CD4-positive, alpha-beta memory T cell (primary cell): ENCODE measurements at regions of chr3 and their contacts with region 1.

Region 1: DNA sequence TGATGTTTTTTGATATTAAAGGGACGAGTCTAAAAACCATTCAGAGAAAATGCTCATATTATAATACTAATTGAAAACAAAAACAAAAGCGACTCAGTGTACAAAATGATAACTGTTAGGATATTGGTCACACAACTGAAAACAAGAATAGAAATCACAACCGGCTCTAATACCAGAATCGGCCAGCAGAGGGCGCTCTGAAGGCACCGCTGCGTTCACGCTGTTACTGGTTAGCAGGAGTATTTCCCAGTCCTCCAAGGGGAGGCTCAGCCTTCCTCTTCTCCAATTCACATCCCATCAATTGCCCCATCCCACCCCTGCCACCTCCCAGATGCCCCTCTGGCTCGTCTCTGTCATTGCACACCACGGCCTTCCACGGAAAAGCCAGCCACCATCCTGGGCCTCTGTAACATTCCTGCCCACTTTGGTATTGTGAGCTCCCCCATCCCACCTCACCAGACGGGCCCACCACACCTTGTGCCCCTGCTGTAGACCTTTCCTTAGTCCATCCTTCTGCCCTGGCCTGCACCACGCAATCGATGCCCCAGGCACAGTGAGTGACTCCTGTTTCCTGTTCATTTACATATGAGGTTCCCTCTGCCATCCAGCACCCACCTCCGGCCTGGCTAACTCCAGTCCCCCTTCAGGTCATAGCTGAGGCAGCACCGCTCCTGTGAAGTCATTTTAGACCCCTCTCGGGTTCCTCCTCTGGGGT is 8.5 kb downstream of the FAM107A start:
- DNase-seq: peak in 4 of 5 donors; percentile 37 to 50 (median 41)
- H3K4me3 ChIP-seq: no peak overlapping the region
- H3K4me3 Mint-ChIP-seq: peak overlapping the region; percentile 2 to 72 (median 54)
- H3K27ac ChIP-seq: no peak overlapping the region
- H3K27ac Mint-ChIP-seq: peak overlapping the region in 2 of 7 donors; percentile 79 to 81
- H3K4me1 ChIP-seq: peaks cover 7% of the 10 kb centered on the region
- H3K4me1 Mint-ChIP-seq: peaks cover 4 to 7% (median 6%) of the 10 kb centered on the region in 4 donors
- H3K27me3 ChIP-seq: no peaks in the 10 kb centered on the region
- H3K27me3 Mint-ChIP-seq: peaks cover 2 to 7% of the 10 kb centered on the region in 2 donors

Region 2: DNA sequence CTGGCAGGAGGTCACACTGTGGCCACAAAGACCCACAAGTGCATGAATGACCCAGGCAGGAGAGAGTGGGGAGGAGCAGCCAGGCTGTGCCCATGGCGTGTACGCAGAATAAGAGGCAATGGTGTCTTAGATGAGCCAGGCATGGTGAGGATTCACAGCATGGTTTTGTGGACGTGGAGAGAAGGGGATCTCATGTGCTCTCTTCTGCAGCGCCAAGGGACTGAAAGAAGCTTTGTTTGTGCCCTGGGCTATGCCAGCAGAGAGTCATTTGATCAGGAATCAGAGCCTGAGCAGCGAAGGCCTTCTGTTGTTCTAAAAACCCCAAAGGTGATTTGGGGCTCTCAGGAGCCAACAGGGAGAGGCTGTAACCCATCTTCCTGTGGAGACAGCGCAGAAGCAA is 281.4 kb before region 1 on chr3:
- CTCF ChIA-PET with region 1: no interaction called
- POLR2A ChIA-PET with region 1: no interaction called
- intact Hi-C with region 1: no loop called
- DNase-seq: no peak
- H3K4me3 ChIP-seq: no peak overlapping the region
- H3K4me3 Mint-ChIP-seq: no peak overlapping the region
- H3K27ac ChIP-seq: no peak overlapping the region
- H3K27ac Mint-ChIP-seq: peak overlapping the region in 1 of 7 donors; percentile 72
- H3K4me1 ChIP-seq: no peaks in the 10 kb centered on the region
- H3K4me1 Mint-ChIP-seq: no peaks in the 10 kb centered on the region
- H3K27me3 ChIP-seq: no peaks in the 10 kb centered on the region
- H3K27me3 Mint-ChIP-seq: no peaks in the 10 kb centered on the region

Region 3: DNA sequence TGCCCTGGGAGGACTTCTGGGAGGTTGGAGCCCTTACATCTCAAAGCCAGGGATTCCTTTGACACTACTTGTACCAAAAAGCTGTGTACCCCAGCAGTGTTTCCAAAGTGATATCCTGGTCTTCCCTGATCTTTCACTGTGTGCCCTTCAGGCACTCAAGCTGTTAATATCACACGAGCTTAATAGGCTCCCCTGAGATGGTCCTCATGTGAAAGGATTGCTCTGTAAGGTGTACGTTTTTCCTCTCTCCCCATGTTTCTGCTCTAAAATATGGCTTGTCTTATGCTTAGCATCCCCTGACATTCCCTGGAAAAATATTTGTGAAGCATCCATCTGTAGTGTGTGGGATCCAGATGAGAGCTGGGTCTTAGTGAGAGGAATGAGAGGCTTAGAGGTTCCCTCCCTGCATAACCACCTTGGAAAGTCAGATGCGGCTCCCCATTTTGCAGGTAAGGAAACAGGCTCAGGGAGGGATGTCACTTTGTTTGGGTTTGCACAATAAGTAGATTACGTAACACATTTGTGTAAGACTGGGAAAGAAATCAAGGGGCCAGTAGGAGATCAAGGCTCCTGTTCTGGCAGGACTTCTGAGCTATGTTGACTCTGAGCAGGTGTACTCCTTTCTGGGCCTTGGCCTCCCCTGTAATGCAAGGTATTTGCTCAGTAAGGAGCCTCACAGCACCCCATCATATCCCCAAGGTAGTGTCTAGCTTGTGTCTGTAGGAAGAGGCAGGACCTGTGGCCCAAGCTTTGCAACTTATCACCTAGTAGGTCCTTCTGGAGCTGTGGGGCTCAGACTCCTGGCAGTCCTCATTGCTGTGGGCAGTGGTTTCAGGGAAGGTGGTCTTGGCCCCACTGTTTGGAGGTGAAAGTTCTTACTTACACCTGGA is 31.1 kb before region 1 on chr3:
- CTCF ChIA-PET with region 1: no interaction called
- POLR2A ChIA-PET with region 1: no interaction called
- intact Hi-C with region 1: no loop called
- DNase-seq: no peak
- H3K4me3 ChIP-seq: no peak overlapping the region
- H3K4me3 Mint-ChIP-seq: no peak overlapping the region
- H3K27ac ChIP-seq: no peak overlapping the region
- H3K27ac Mint-ChIP-seq: no peak overlapping the region
- H3K4me1 ChIP-seq: peaks cover 6% of the 10 kb centered on the region
- H3K4me1 Mint-ChIP-seq: peaks cover 3 to 6% (median 5%) of the 10 kb centered on the region in 4 donors
- H3K27me3 ChIP-seq: no peaks in the 10 kb centered on the region
- H3K27me3 Mint-ChIP-seq: no peaks in the 10 kb centered on the region

Region 4: DNA sequence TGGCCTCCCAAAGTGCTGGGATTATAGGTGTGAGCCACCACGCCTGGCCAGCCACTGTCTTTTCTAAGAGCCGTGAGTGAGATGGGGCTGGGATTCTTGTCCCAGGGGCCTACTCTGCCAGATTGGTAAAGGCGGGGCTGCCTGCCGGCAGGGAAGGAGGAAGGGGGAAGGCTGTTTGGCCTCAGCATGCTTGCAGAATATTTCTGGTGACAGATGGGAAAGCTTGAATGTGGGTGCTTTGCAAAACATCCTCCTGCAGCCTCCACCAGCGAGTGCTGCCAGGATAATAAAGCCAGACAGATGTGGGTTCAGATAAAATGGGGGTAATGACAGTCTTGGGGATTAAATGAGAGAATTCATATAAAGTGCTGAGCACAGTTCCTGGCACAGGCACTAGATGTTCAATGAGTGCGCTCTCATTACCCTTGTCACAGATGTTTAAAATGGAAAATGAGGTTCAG is 11.9 kb before region 1 on chr3:
- CTCF ChIA-PET with region 1: interaction called, 54 read pairs
- POLR2A ChIA-PET with region 1: no interaction called
- intact Hi-C with region 1: no loop called
- DNase-seq: no peak
- H3K4me3 ChIP-seq: no peak overlapping the region
- H3K4me3 Mint-ChIP-seq: no peak overlapping the region
- H3K27ac ChIP-seq: no peak overlapping the region
- H3K27ac Mint-ChIP-seq: no peak overlapping the region
- H3K4me1 ChIP-seq: no peaks in the 10 kb centered on the region
- H3K4me1 Mint-ChIP-seq: no peaks in the 10 kb centered on the region
- H3K27me3 ChIP-seq: no peaks in the 10 kb centered on the region
- H3K27me3 Mint-ChIP-seq: peaks cover 2 to 8% of the 10 kb centered on the region in 2 donors

Region 5: GRCh38 chr3:58585005-58585786 is 16.5 kb after region 1 on chr3:
- CTCF ChIA-PET with region 1: interaction called, 26 read pairs
- POLR2A ChIA-PET with region 1: interaction called, 3 read pairs
- intact Hi-C with region 1: no loop called
- DNase-seq: peak in 4 of 5 donors; percentile 14 to 33 (median 20)
- H3K4me3 ChIP-seq: peak overlapping the region; percentile 65 to 86
- H3K4me3 Mint-ChIP-seq: peak overlapping the region; percentile 87 to 96 (median 94)
- H3K27ac ChIP-seq: no peak overlapping the region
- H3K27ac Mint-ChIP-seq: peak overlapping the region in 4 of 7 donors; percentile 25 to 69 (median 50)
- H3K4me1 ChIP-seq: peaks cover 10% of the 10 kb centered on the region
- H3K4me1 Mint-ChIP-seq: peaks cover 9 to 23% (median 17%) of the 10 kb centered on the region in 4 donors
- H3K27me3 ChIP-seq: peaks cover 22% of the 10 kb centered on the region
- H3K27me3 Mint-ChIP-seq: peaks cover 25 to 36% of the 10 kb centered on the region in 2 donors